Posterior cingulate gyrus (tissue), 11 donors: ENCODE measurements at regions of chr5 and their contacts with region 1.

Region 1: GRCh38 chr5:24642022-24642421 is 2.8 kb downstream of the CDH10 start:
- DNase-seq: peak in 1 of 10 donors; percentile 66

Region 2: GRCh38 chr5:24444414-24444813 is 197.6 kb before region 1 on chr5:
- intact Hi-C with region 1: loop called (anchors 10 kb)
- DNase-seq: no peak

Region 3: GRCh38 chr5:24555229-24555628 is 86.8 kb before region 1 on chr5:
- intact Hi-C with region 1: no loop called
- DNase-seq: no peak